CD8-positive, alpha-beta T cell (primary cell): ENCODE measurements at regions of chr2 and their contacts with region 1.

Region 1: DNA sequence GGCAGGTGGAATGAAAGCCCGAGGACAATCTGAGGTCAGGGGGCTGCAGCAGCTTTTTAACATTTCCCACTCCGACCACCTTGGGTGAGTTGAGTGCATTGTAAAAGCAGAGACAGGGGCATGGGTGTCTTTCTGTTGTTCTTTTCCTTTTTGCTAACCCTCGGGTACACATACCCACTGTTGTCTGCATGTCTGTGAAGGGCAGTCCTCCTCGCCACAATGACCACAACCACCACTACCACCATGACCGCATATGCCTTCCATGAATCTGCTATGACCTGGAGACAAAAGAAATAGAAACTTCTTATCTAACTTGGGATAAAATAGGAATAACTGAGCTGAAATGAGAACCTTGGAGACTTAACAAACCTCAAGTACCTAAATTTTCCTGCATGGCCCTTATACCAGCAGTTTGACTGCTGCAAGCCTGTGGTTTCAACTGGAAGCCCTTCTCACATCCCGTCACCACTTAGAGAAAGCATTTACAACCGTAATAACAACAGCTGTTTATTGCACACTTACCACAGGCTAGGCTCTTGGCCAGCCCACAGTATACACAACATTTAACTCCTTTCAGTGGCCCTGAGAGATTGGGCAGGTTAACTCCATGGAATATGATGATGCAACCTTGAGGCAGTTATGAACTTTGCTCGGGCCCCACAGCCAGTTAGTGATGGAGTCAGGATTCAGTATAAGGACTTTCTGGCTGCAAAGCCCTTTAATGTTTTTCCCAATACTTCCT is 80.3 kb downstream of the GYPC start:
- DNase-seq: peak in 3 of 9 experiments; percentile 8 to 26 (median 14)
- ATAC-seq: no peak
- H3K4me3 ChIP-seq: no peak overlapping the region
- H3K4me3 Mint-ChIP-seq: no peak overlapping the region
- H3K27ac ChIP-seq: no peak overlapping the region
- H3K27ac Mint-ChIP-seq: no peak overlapping the region
- H3K4me1 ChIP-seq: no peaks in the 10 kb centered on the region
- H3K4me1 Mint-ChIP-seq: peaks cover 11% of the 10 kb centered on the region
- H3K27me3 ChIP-seq: peaks cover 0 to 3% of the 10 kb centered on the region in 2 experiments
- H3K27me3 Mint-ChIP-seq: no peaks in the 10 kb centered on the region
- CTCF ChIP-seq: no peak

Region 2: DNA sequence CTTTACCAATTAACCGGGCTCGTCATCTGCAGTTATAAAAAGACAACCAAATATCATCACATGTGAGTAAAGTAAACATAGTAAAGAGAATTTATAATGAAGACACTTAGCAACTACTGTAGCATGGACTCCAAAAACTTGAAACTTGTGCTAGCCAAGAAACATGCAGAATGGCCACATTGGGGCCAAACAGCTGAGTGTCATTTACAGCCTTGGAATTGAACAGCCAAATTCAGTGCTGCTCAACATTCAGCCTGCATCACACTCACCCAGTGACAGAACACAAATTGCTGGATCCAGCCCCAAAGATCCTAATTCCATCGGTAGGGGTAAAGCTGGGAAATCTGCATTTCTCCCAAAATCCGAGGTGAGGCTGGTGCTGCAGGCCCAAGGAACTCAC is 305.2 kb before region 1 on chr2:
- CTCF ChIA-PET with region 1: no interaction called
- POLR2A ChIA-PET with region 1: no interaction called
- intact Hi-C with region 1: no loop called
- DNase-seq: no peak
- ATAC-seq: no peak
- H3K4me3 ChIP-seq: no peak overlapping the region
- H3K4me3 Mint-ChIP-seq: no peak overlapping the region
- H3K27ac ChIP-seq: no peak overlapping the region
- H3K27ac Mint-ChIP-seq: no peak overlapping the region
- H3K4me1 ChIP-seq: no peaks in the 10 kb centered on the region
- H3K4me1 Mint-ChIP-seq: no peaks in the 10 kb centered on the region
- H3K27me3 ChIP-seq: no peaks in the 10 kb centered on the region
- H3K27me3 Mint-ChIP-seq: peaks cover 6% of the 10 kb centered on the region
- CTCF ChIP-seq: no peak

Region 3: GRCh38 chr2:126770466-126770865 is 34.2 kb after region 1 on chr2:
- CTCF ChIA-PET with region 1: no interaction called
- POLR2A ChIA-PET with region 1: no interaction called
- intact Hi-C with region 1: loop called in 1 of 2 experiments (anchors 1 kb)
- DNase-seq: no peak
- ATAC-seq: no peak
- H3K4me3 ChIP-seq: no peak overlapping the region
- H3K4me3 Mint-ChIP-seq: no peak overlapping the region
- H3K27ac ChIP-seq: no peak overlapping the region
- H3K27ac Mint-ChIP-seq: no peak overlapping the region
- H3K4me1 ChIP-seq: peaks cover 26% of the 10 kb centered on the region
- H3K4me1 Mint-ChIP-seq: peaks cover 46% of the 10 kb centered on the region
- H3K27me3 ChIP-seq: no peaks in the 10 kb centered on the region
- H3K27me3 Mint-ChIP-seq: no peaks in the 10 kb centered on the region
- CTCF ChIP-seq: no peak